CD4-positive, alpha-beta memory T cell (primary cell): ENCODE measurements at regions of chr10 and their contacts with region 1.

Region 1: DNA sequence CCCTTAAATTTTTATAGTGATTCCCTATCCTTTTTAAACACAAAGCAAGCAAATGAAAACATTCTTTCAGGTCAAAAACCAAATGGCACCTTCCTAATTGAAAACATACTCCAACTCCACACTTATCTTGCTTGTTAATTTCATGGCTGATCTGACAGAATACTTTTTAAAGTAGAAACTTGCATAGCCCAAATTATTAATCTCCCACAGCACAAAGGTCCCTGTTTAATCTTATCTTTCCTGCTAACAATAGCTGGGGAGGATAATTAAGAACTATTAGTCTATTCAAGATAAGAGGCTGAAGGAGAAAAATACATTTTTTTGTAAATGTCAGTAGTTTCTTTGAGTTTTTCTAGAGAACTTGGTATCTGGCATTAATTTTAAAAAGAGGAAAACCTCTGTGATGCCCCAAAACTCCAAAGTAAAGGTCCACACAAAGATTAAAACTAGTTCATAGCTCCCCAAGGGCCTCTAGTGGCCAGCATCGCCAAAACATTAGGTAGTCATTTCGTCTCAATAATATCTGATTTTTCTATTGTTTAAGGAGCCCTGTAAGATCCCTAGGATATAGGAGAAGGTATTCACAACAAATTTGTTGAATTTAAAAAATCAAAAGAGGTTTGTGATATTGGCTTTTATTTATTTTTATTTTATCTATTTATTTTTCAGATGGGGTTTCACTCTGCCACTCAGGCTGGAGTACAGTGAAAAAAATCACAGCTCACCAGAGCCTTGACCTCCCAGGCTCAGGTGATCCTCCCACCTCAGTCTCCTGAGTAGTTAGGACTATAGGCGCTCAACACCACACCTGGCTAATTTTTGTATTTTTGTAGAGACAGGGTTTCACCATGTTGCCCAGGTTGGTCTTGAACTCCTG is 14.7 kb downstream of the CDNF start:
- DNase-seq: peak in 4 of 5 donors; percentile 39 to 56 (median 41)
- H3K4me3 ChIP-seq: no peak overlapping the region
- H3K4me3 Mint-ChIP-seq: no peak overlapping the region
- H3K27ac ChIP-seq: no peak overlapping the region
- H3K27ac Mint-ChIP-seq: peak overlapping the region in 2 of 7 donors; percentile 18 to 72
- H3K4me1 ChIP-seq: no peaks in the 10 kb centered on the region
- H3K4me1 Mint-ChIP-seq: peaks cover 0 to 14% (median 4%) of the 10 kb centered on the region in 4 donors
- H3K27me3 ChIP-seq: no peaks in the 10 kb centered on the region
- H3K27me3 Mint-ChIP-seq: no peaks in the 10 kb centered on the region

Region 2: DNA sequence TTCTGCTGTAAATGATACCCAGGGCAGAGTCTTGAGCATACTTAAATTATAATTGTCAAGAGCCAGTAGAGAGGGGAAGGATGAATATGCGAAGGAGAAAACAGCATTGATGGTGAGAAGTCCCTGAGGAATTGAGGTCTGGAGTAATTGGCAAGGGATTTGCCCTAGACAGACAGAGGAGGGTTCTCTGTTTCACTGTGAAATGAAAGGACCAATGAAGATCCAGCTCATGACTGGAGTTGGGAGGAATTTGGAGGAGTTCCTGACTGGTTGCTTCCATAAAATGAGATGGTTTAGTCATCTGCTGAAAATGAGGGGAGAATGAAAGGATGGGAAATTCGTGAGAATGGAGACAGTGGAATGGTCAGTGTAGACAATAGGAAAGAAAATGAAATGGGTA is 1229.6 kb before region 1 on chr10:
- CTCF ChIA-PET with region 1: no interaction called
- POLR2A ChIA-PET with region 1: no interaction called
- intact Hi-C with region 1: no loop called
- DNase-seq: no peak
- H3K4me3 ChIP-seq: no peak overlapping the region
- H3K4me3 Mint-ChIP-seq: no peak overlapping the region
- H3K27ac ChIP-seq: no peak overlapping the region
- H3K27ac Mint-ChIP-seq: no peak overlapping the region
- H3K4me1 ChIP-seq: peaks cover 10% of the 10 kb centered on the region
- H3K4me1 Mint-ChIP-seq: peaks cover 33 to 57% (median 39%) of the 10 kb centered on the region in 4 donors
- H3K27me3 ChIP-seq: no peaks in the 10 kb centered on the region
- H3K27me3 Mint-ChIP-seq: no peaks in the 10 kb centered on the region

Region 3: GRCh38 chr10:14195433-14195832 is 627.7 kb before region 1 on chr10:
- CTCF ChIA-PET with region 1: interaction called, 17 read pairs
- POLR2A ChIA-PET with region 1: no interaction called
- intact Hi-C with region 1: loop called (anchors 1 kb)
- DNase-seq: no peak
- H3K4me3 ChIP-seq: no peak overlapping the region
- H3K4me3 Mint-ChIP-seq: no peak overlapping the region
- H3K27ac ChIP-seq: no peak overlapping the region
- H3K27ac Mint-ChIP-seq: no peak overlapping the region
- H3K4me1 ChIP-seq: no peaks in the 10 kb centered on the region
- H3K4me1 Mint-ChIP-seq: no peaks in the 10 kb centered on the region
- H3K27me3 ChIP-seq: no peaks in the 10 kb centered on the region
- H3K27me3 Mint-ChIP-seq: peaks cover 19 to 37% of the 10 kb centered on the region in 2 donors

Region 4: GRCh38 chr10:14200698-14201544 is 622.2 kb before region 1 on chr10:
- CTCF ChIA-PET with region 1: interaction called, 17 read pairs
- POLR2A ChIA-PET with region 1: no interaction called
- intact Hi-C with region 1: loop called (anchors 1 kb)
- DNase-seq: peak in 1 of 5 donors; percentile 26
- H3K4me3 ChIP-seq: no peak overlapping the region
- H3K4me3 Mint-ChIP-seq: no peak overlapping the region
- H3K27ac ChIP-seq: no peak overlapping the region
- H3K27ac Mint-ChIP-seq: no peak overlapping the region
- H3K4me1 ChIP-seq: no peaks in the 10 kb centered on the region
- H3K4me1 Mint-ChIP-seq: no peaks in the 10 kb centered on the region
- H3K27me3 ChIP-seq: no peaks in the 10 kb centered on the region
- H3K27me3 Mint-ChIP-seq: peaks cover 10 to 24% of the 10 kb centered on the region in 2 donors

Region 5: GRCh38 chr10:14302035-14302434 is 521.1 kb before region 1 on chr10:
- CTCF ChIA-PET with region 1: no interaction called
- POLR2A ChIA-PET with region 1: no interaction called
- intact Hi-C with region 1: loop called (anchors 5 kb)
- DNase-seq: no peak
- H3K4me3 ChIP-seq: no peak overlapping the region
- H3K4me3 Mint-ChIP-seq: no peak overlapping the region
- H3K27ac ChIP-seq: no peak overlapping the region
- H3K27ac Mint-ChIP-seq: no peak overlapping the region
- H3K4me1 ChIP-seq: no peaks in the 10 kb centered on the region
- H3K4me1 Mint-ChIP-seq: no peaks in the 10 kb centered on the region
- H3K27me3 ChIP-seq: no peaks in the 10 kb centered on the region
- H3K27me3 Mint-ChIP-seq: peaks cover 7 to 14% of the 10 kb centered on the region in 2 donors

Region 6: DNA sequence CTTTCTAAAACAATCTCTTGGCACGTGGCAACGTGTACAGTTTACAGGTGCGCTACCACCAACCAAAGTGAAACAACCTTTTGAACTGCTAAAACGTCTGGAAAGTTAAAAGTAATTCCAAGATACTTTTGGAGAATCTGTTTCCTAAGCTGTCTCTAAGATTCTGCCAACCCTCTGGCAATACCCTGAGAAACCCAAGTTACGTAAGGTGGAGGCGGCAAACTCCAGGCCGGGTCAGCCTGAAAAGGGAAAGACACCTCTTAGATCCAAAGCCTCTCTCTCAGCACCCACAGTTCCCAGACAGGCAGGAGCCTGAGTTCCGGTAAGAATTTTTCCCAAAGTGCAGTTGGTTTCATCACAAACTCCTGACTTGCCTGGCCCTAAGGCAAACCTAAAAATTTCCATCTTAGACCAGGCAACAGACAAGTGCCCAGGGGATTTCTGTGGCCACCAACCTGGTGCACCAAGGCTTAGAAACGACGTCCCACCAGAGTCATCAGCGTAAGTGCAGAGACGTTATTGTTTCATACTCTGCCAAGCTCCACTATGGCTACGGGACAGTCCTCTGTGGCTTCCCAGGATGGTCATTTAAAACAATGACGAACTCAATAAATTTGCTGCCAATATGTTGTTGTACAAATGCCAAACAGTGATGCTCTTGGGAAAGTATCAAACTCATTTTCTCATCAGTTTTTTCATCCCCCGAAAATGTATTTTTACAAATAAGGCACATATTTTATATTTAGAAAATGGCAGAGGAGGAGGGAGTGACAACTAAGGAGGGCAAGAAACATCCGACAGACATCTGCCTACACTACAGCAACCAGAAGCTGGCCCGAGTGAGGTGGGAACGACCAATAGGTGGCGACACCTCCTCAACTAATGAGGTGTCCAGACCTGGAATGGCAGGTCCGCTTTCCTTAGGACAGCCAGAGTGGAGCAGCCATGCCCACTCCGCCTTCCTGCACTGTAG is 286.6 kb before region 1 on chr10:
- CTCF ChIA-PET with region 1: interaction called, 45 read pairs
- POLR2A ChIA-PET with region 1: interaction called, 8 read pairs
- intact Hi-C with region 1: loop called (anchors 1 kb)
- DNase-seq: peak in 1 of 5 donors; percentile 30
- H3K4me3 ChIP-seq: no peak overlapping the region
- H3K4me3 Mint-ChIP-seq: peak overlapping the region in 1 of 8 donors; percentile 15
- H3K27ac ChIP-seq: peak overlapping the region; percentile 27
- H3K27ac Mint-ChIP-seq: peak overlapping the region; percentile 15 to 94 (median 83)
- H3K4me1 ChIP-seq: peaks cover 91% of the 10 kb centered on the region
- H3K4me1 Mint-ChIP-seq: peaks cover 71 to 100% (median 87%) of the 10 kb centered on the region in 4 donors
- H3K27me3 ChIP-seq: no peaks in the 10 kb centered on the region
- H3K27me3 Mint-ChIP-seq: no peaks in the 10 kb centered on the region

Region 7: DNA sequence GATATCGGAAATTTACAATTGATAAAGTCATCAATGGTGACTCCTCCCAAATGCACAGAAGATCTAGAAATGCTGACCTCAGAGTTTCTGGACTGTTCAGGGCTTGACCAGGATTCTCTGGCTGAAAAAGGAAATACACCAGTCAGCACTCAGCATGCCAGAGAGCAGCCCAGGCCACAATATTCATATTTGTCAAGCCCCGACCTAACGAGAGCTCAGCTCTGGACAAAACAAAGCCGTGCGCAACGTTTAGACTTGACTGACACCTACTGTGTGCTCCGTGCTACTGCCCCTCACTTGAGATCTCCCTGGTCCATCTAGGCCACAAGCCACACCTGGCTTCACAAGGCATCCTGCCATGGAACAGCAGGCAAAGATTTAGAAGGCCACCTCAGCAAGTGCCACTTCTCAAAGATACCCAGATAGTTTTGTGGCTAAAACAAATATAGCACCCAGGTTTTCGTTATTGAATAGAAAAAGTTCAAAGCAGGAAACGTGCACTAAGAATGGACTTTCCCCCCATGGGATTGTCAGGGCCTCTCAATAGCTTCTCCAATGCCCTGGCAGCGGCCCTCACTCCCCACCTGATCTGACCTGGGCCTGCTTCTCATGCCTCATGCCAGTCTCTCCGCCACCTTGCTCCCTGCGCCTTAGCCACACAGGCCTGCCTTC is 266.7 kb before region 1 on chr10:
- CTCF ChIA-PET with region 1: interaction called, 10 read pairs
- POLR2A ChIA-PET with region 1: interaction called, 3 read pairs
- intact Hi-C with region 1: loop called (anchors 1 kb)
- DNase-seq: peak in 4 of 5 donors; percentile 34 to 64 (median 47)
- H3K4me3 ChIP-seq: no peak overlapping the region
- H3K4me3 Mint-ChIP-seq: peak overlapping the region; percentile 53 to 87 (median 75)
- H3K27ac ChIP-seq: peak overlapping the region; percentile 65
- H3K27ac Mint-ChIP-seq: peak overlapping the region; percentile 93 to 97 (median 94)
- H3K4me1 ChIP-seq: peaks cover 100% of the 10 kb centered on the region
- H3K4me1 Mint-ChIP-seq: peaks cover 80 to 99% (median 89%) of the 10 kb centered on the region in 4 donors
- H3K27me3 ChIP-seq: no peaks in the 10 kb centered on the region
- H3K27me3 Mint-ChIP-seq: no peaks in the 10 kb centered on the region